ENCODE measurements at regions of chr14 and their contacts with region 1.

Region 1: DNA sequence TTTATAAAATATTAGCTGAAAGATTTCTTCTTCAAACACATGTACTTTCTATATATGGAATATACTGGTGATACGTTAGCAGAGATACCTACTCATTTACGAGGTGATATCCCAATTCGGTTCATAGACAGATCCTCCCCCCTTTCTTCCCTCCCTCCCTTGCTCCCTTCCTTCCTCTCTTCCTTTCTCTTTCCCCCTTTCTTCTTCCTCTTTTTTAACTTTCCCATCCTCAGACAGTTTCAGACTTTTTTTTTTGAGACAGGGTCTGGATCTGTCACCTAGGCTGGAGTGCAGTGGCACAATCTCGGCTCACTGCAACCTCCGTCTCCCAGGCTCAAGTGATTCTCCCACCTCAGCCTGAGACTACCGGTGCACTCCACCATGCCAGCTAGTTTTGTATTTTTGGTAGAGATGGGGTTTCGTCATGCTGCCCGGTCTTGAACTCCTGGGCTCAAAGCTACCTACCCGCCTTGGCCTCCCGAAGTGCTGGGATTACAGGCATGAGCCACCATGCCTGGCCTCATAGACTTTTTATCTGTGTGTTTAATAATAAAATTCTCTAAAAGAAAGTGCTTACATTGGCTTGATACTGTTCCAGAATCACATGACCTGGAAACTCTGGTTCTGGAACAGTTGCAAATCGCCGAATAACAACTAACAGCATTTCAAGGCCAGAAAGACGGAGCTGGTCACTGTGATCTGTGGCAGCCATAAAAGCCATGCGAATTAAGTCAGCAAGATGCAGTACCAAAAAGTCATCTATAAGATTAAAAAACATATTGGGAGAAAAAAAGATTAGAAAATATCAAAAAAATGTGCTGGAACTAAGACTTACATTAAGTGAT is 99.2 kb downstream of the HEATR5A start:
- DNase-seq: no peak
- H3K4me3 ChIP-seq: no peak overlapping the region
- H3K27ac ChIP-seq: no peak overlapping the region
- H3K4me1 ChIP-seq: no peaks in the 10 kb centered on the region
- CTCF ChIP-seq: no peak

Region 2: GRCh38 chr14:31678421-31679249 is 357.5 kb after region 1 on chr14:
- CTCF ChIA-PET with region 1: no interaction called
- POLR2A ChIA-PET with region 1: interaction called, 11 read pairs
- intact Hi-C with region 1: no loop called
- DNase-seq: no peak
- H3K4me3 ChIP-seq: no peak overlapping the region
- H3K27ac ChIP-seq: no peak overlapping the region
- H3K4me1 ChIP-seq: no peaks in the 10 kb centered on the region
- CTCF ChIP-seq: no peak

Measured in OCI-LY7 (cell line).